ENCODE measurements at regions of chr7 and their contacts with region 1.

Region 1: DNA sequence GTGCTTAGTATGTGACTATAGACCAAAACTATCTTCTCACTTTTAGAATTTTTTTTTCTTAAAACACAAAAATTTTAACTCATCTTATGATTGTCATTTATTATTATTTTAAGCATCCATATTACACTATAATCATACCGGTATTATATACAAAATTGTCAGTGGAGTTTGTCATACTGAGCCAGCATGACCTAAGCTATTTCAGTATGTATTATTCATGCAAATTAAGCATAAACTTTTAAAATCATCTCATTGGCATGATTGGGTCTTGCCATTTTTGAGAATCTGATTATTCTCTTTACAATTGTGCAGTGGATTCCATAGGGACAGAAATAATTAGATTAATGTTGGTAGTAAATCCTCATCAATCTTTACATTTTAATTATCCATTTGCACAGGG is 46.2 kb upstream of the STMP1 start:
- DNase-seq: no peak
- ATAC-seq: no peak
- H3K4me3 ChIP-seq: no peak overlapping the region
- H3K27ac ChIP-seq: no peak overlapping the region
- H3K4me1 ChIP-seq: no peaks in the 10 kb centered on the region
- H3K27me3 ChIP-seq: no peaks in the 10 kb centered on the region
- CTCF ChIP-seq: no peak
- EP300 ChIP-seq: no peak
- POLR2A ChIP-seq: no peak
- RAD21 ChIP-seq: no peak

Region 2: GRCh38 chr7:135490783-135491182 is 125.4 kb before region 1 on chr7:
- CTCF ChIA-PET with region 1: no interaction called
- POLR2A ChIA-PET with region 1: no interaction called
- RAD21 ChIA-PET with region 1: no interaction called
- SMC1A ChIA-PET with region 1: no interaction called
- in situ Hi-C with region 1: no loop called
- intact Hi-C with region 1: no loop called
- DNase-seq: no peak
- ATAC-seq: no peak
- H3K4me3 ChIP-seq: no peak overlapping the region
- H3K27ac ChIP-seq: no peak overlapping the region
- H3K4me1 ChIP-seq: no peaks in the 10 kb centered on the region
- H3K27me3 ChIP-seq: no peaks in the 10 kb centered on the region
- CTCF ChIP-seq: no peak
- EP300 ChIP-seq: no peak
- POLR2A ChIP-seq: no peak
- RAD21 ChIP-seq: no peak

Region 3: GRCh38 chr7:135509903-135510602 is 106.1 kb before region 1 on chr7 and contains the start of gene CNOT4:
- CTCF ChIA-PET with region 1: no interaction called
- POLR2A ChIA-PET with region 1: no interaction called
- RAD21 ChIA-PET with region 1: no interaction called
- SMC1A ChIA-PET with region 1: no interaction called
- in situ Hi-C with region 1: no loop called
- intact Hi-C with region 1: no loop called
- DNase-seq: peak; percentile 82
- ATAC-seq: peak; percentile 93
- H3K4me3 ChIP-seq: peak within 1 kb of the TSS; percentile 94
- H3K27ac ChIP-seq: peak within 1 kb of the TSS; percentile 97
- H3K4me1 ChIP-seq: no peaks in the 10 kb centered on the region
- H3K27me3 ChIP-seq: no peaks in the 10 kb centered on the region
- CTCF ChIP-seq: no peak
- EP300 ChIP-seq: no peak
- POLR2A ChIP-seq: peak; percentile 89
- RAD21 ChIP-seq: no peak
- polyA plus RNA-seq, gene CNOT4: 11.3 to 29.6 TPM

Region 4: DNA sequence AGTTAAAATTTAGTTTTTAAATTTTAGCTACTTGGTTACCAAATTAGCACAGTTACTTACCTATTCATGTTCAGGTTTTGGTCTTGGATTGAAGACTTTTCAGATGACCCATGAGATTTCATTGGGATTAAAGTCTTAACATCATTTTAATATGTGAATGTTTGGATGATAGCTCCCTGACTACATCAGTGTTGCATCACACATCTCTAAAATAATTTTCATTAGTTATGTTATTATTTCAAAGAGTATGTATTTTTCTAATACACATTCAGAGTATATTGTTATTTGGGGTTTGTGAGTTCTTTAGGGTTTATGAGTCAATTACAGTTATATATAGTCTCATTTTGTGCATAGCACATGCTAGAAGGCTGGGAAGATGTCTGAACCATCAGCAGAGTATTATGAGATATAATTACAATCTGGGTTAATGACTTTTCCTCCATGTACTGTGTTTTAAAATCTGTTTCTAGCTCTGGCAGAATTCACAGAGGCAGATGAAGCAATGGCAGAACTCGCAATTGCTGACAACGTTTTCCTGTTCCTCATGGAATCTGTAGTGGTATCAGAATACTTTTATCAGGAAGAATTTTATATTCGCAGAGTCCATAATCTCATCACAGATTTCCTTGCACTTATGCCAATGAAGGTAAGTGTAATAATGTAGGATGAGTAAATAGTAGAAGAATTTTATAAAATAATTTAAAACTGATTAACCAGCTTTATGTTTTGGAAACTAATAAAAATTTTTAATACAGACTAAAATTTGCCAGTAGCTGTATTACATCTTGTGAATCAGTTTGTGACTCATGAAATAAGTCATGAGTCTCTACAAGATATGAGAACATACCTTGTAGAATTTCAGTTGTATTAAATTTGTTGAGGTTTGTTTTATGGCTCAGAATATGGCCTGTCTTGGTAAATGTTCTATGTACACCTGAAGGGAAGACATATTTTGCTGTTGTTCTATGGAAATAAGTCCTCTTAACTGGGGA is 31.5 kb before region 1 on chr7:
- CTCF ChIA-PET with region 1: interaction called, 4 read pairs
- POLR2A ChIA-PET with region 1: no interaction called
- RAD21 ChIA-PET with region 1: no interaction called
- SMC1A ChIA-PET with region 1: no interaction called
- in situ Hi-C with region 1: no loop called
- intact Hi-C with region 1: loop called (anchors 5 kb)
- DNase-seq: no peak
- ATAC-seq: no peak
- H3K4me3 ChIP-seq: no peak overlapping the region
- H3K27ac ChIP-seq: no peak overlapping the region
- H3K4me1 ChIP-seq: no peaks in the 10 kb centered on the region
- H3K27me3 ChIP-seq: no peaks in the 10 kb centered on the region
- CTCF ChIP-seq: no peak
- EP300 ChIP-seq: no peak
- POLR2A ChIP-seq: no peak
- RAD21 ChIP-seq: no peak

Region 5: DNA sequence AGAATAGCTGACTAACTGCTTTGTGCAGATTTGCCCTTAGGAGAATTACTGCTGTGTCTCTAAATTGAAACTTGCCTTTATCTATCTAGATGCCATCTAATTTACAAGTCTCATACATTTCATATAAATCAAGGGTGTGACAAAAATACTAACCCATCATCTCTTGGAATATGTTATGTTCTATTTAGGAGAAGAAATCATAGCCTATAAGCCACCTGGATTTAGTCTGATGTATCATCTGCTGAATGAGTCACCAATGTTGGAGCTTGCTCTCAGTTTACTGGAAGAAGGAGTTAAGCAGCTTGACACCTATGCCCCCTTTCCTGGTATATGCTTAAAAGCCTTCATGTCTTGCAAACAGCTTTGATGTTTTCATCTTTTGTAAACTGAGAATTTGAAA is 15.0 kb before region 1 on chr7:
- CTCF ChIA-PET with region 1: interaction called, 8 read pairs
- POLR2A ChIA-PET with region 1: interaction called, 3 read pairs
- RAD21 ChIA-PET with region 1: no interaction called
- SMC1A ChIA-PET with region 1: interaction called, 3 read pairs
- in situ Hi-C with region 1: no loop called
- intact Hi-C with region 1: loop called (anchors 2 kb)
- DNase-seq: no peak
- ATAC-seq: no peak
- H3K4me3 ChIP-seq: no peak overlapping the region
- H3K27ac ChIP-seq: no peak overlapping the region
- H3K4me1 ChIP-seq: no peaks in the 10 kb centered on the region
- H3K27me3 ChIP-seq: no peaks in the 10 kb centered on the region
- CTCF ChIP-seq: no peak
- EP300 ChIP-seq: no peak
- POLR2A ChIP-seq: no peak
- RAD21 ChIP-seq: no peak

Measured in GM12878 (cell line).